Colonic mucosa (tissue), 4 donors: ENCODE measurements at regions of chr10 and their contacts with region 1.

Region 1: DNA sequence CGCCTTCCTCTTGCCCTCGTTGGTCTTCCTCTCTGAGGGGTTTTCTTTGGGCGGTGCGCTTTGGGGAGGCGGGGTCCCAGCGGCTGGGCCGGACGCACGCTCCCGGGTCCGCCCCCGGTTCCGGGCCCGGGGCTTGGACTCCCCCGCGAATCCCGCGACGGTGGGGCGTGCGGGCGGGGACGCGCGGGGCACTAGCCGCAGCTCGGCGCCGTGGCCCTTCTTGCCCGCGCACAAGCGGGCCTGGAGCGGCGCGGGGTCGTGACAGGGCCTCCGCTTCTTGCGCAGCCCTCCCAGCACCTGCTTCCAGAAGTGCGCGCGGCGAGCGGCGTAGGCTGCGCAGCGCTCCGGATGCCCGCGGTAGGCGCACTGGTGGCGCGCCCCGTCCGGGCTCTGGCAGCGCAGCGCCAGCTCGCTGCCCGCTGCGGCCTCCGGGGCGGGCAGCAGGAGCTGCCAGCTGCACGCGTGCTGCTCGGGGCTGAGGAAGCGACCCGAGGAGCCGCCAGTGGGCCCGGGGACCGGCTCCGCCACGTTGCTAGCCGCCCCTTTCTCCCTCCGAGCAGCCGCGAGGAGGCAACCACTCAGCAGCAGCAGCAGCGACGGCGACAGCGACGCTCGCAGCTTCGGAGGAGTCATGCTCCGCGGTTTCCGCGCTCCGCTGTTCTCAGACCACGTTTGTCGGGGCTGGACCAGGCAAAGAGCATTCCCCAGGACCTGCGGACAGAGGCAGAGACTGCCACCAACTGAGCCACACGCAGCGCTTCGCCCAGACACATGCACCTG is 759 bp downstream of the FGFBP3 start:
- DNase-seq: peak; percentile 77
- H3K4me3 ChIP-seq: peak overlapping the region; percentile 94
- H3K27ac ChIP-seq: peak overlapping the region; percentile 61
- H3K4me1 ChIP-seq: no peaks in the 10 kb centered on the region
- H3K27me3 ChIP-seq: no peaks in the 10 kb centered on the region
- CTCF ChIP-seq: peak; percentile 38

Region 2: GRCh38 chr10:91758303-91759146 is 150.0 kb before region 1 on chr10:
- intact Hi-C with region 1: loop called (anchors 5 kb)
- DNase-seq: no peak
- H3K4me3 ChIP-seq: no peak overlapping the region
- H3K27ac ChIP-seq: no peak overlapping the region
- H3K4me1 ChIP-seq: no peaks in the 10 kb centered on the region
- H3K27me3 ChIP-seq: no peaks in the 10 kb centered on the region
- CTCF ChIP-seq: peak; percentile 29

Region 3: GRCh38 chr10:91983416-91983815 is 74.9 kb after region 1 on chr10:
- intact Hi-C with region 1: no loop called
- DNase-seq: no peak
- H3K4me3 ChIP-seq: no peak overlapping the region
- H3K27ac ChIP-seq: no peak overlapping the region
- H3K4me1 ChIP-seq: no peaks in the 10 kb centered on the region
- H3K27me3 ChIP-seq: no peaks in the 10 kb centered on the region
- CTCF ChIP-seq: no peak

Region 4: GRCh38 chr10:92074126-92074887 is 165.8 kb after region 1 on chr10:
- intact Hi-C with region 1: no loop called
- DNase-seq: no peak
- H3K4me3 ChIP-seq: no peak overlapping the region
- H3K27ac ChIP-seq: no peak overlapping the region
- H3K4me1 ChIP-seq: no peaks in the 10 kb centered on the region
- H3K27me3 ChIP-seq: no peaks in the 10 kb centered on the region
- CTCF ChIP-seq: no peak